ENCODE measurements at regions of chr4 and their contacts with region 1.

Region 1: DNA sequence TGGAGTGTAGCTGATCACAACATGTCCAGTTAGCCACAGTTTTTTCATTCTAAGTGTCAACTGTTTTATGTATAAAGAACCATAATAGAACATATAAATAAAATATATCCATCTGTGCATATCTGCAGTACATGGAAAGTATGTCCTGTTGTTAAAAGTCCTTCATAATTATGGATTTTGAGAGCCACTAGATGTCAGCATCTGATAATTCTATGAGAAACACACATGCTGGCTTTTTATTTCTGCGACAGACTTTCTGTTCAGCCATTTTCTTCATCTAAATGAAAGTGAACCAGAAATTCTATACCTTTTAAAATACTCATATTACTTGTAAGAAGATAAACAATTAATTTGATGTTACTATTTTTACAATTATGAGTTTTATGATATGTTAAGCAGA is 251.5 kb downstream of the GPM6A start:
- DNase-seq: peak; percentile 5
- ATAC-seq: no peak
- H3K4me3 ChIP-seq: no peak overlapping the region
- H3K27ac ChIP-seq: no peak overlapping the region
- H3K4me1 ChIP-seq: no peaks in the 10 kb centered on the region
- H3K27me3 ChIP-seq: no peaks in the 10 kb centered on the region
- CTCF ChIP-seq: peak; percentile 28; the same call in 1 of the 2 replicates

Region 2: DNA sequence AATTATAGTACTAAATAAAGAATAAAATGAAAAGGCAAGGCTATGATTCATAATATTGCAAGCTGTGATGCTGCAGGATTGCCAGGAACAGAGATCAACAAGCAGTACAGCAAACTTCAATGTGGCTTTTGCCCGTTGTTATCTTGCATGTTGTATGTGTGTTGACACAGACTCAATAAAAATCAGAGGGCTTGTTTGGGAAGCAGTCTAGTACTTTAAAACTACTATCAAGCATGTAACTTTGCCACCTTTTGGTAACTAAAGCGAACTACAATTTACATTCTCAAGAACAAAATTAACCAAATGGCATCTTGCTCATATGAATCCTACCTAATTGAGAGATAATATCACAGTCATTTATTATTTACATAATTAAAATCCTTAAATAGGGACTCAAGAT is 331.2 kb after region 1 on chr4:
- CTCF ChIA-PET with region 1: no interaction called
- POLR2A ChIA-PET with region 1: no interaction called
- in situ Hi-C with region 1: no loop called
- intact Hi-C with region 1: loop called (anchors 2 kb)
- DNase-seq: peak; percentile 8
- ATAC-seq: no peak
- H3K4me3 ChIP-seq: no peak overlapping the region
- H3K27ac ChIP-seq: no peak overlapping the region
- H3K4me1 ChIP-seq: no peaks in the 10 kb centered on the region
- H3K27me3 ChIP-seq: no peaks in the 10 kb centered on the region
- CTCF ChIP-seq: peak; percentile 28; the same call in 1 of the 2 replicates

Region 3: GRCh38 chr4:176020481-176021085 is 460.0 kb after region 1 on chr4:
- CTCF ChIA-PET with region 1: no interaction called
- POLR2A ChIA-PET with region 1: no interaction called
- in situ Hi-C with region 1: no loop called
- intact Hi-C with region 1: loop called (anchors 5 kb)
- DNase-seq: no peak
- ATAC-seq: no peak
- H3K4me3 ChIP-seq: no peak overlapping the region
- H3K27ac ChIP-seq: no peak overlapping the region
- H3K4me1 ChIP-seq: no peaks in the 10 kb centered on the region
- H3K27me3 ChIP-seq: no peaks in the 10 kb centered on the region
- CTCF ChIP-seq: no peak

Measured in Panc1 (cell line).